GM23248 (cell line): ENCODE measurements at regions of chr16 and their contacts with region 1.

Region 1: DNA sequence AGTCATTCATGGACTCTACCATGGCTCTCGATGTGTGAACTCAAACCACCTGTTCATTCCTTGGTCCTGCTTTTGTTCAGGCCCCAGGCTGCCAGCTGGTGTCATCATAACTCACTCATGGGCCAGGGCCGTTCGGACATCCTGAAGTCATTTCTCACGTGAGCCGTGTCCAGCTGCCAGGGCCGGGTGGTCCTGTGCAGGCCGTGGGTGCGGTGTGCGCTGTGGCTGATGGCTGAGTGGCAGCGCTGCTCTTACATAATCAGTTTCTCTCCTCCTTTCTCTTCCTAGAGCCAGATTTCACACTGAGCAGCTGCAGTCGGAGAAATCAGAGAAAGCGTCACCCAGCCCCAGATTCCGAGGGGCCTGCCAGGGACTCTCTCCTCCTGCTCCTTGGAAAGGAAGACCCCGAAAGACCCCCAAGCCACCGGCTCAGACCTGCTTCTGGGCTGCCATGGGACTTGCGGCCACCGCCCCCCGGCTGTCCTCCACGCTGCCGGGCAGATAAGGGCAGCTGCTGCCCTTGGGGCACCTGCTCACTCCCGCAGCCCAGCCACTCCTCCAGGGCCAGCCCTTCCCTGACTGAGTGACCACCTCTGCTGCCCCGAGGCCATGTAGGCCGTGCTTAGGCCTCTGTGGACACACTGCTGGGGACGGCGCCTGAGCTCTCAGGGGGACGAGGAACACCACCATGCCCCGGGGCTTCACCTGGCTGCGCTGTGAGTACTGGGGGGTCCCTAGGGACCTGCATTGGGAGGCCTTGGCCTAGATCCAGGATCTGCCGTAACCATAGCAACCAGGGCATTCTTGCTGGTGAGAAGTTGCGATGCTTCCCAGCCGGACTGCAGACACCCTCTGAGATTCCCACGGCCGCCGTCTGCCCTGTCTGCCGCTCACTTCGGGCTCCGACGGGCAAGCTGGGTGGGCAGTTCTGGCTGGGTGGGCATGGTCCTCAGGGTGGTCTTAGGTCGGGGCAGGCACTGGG is at the start of gene IL34:
- DNase-seq: peak; percentile 45
- H3K4me3 ChIP-seq: no peak within 1 kb of the TSS
- H3K27ac ChIP-seq: no peak within 1 kb of the TSS
- H3K4me1 ChIP-seq: 0 out of 2 replicates have a peak, but pooled peaks cover 7% of the 10 kb centered on the region
- H3K27me3 ChIP-seq: no peaks in the 10 kb centered on the region
- total RNA-seq, gene IL34: 1.0 TPM in 1 of 2 replicates, not detected in the other

Region 2: GRCh38 chr16:70349783-70350182 is 296.8 kb before region 1 on chr16:
- in situ Hi-C with region 1: loop called (anchors 10 kb)
- DNase-seq: no peak
- H3K4me3 ChIP-seq: no peak overlapping the region
- H3K27ac ChIP-seq: no peak overlapping the region
- H3K4me1 ChIP-seq: peaks cover 23% of the 10 kb centered on the region
- H3K27me3 ChIP-seq: no peaks in the 10 kb centered on the region

Region 3: DNA sequence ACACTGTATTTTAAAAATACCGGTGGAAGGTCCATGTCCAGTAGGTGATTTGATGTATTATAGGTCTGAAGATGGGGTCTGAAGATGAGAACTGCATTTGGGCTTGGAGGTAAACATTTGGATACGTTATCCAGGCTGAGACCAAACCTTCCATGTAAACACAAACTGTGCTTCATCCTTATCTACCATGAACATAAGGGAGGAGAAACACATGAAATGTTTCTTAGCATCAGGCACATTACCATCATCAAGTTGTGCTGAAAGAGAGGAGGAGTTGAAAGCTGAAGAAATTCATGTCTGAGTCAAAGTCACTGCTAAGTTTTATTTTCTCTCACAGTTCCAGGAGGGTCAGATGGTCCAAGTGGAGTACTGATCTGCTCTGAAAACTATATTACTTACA is 111.6 kb before region 1 on chr16:
- in situ Hi-C with region 1: loop called (anchors 10 kb)
- DNase-seq: no peak
- H3K4me3 ChIP-seq: no peak overlapping the region
- H3K27ac ChIP-seq: no peak overlapping the region
- H3K4me1 ChIP-seq: no peaks in the 10 kb centered on the region
- H3K27me3 ChIP-seq: no peaks in the 10 kb centered on the region

Region 4: DNA sequence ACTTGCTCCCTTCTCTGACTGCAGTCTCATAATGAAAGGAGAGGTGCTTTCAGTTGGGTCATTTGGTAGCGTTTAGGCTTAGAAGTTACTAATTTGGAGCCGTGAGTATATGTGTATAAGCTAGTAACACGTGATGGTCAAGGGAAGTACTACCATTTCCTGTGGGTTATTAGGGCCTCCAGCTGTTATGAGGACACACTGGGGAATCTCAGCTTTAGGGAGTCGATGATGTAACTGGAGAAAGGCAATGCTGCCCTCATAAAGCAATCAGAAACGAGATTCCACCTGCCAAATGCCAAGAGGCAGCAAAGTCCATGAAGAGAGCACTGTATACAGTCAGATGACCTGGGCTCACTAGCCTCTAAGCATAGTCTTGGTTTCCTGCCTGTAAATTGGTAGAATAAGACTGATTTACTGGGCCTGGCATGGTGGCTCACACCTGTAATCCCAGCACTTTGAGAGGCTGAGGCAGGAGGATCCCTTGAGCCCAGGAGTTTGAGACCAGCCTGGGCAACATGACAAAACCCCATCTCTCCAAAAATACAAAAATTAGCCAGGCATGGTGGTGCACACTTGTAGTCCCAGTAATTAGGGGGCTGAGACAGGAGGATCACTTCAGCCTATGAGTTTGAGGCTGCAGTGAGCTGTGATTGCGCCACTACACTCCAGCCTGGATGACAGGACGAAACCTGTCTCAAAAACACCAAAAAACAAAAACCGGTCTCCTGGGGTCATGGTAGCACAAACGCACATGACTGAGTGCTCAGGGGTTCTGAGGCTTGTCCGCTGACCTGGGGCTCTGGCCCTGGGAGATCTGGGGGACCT is 69.9 kb before region 1 on chr16:
- in situ Hi-C with region 1: no loop called
- DNase-seq: peak; percentile 84
- H3K4me3 ChIP-seq: no peak overlapping the region
- H3K27ac ChIP-seq: peak overlapping the region; percentile 69
- H3K4me1 ChIP-seq: peaks cover 55% of the 10 kb centered on the region
- H3K27me3 ChIP-seq: no peaks in the 10 kb centered on the region